Testis (tissue), 5 donors: ENCODE measurements at regions of chr9 and their contacts with region 1.

Region 1: GRCh38 chr9:121686930-121687541 is 35.6 kb downstream of the DAB2IP start:
- DNase-seq: peak; percentile 87
- H3K4me3 ChIP-seq: no peak overlapping the region
- H3K27ac ChIP-seq: no peak overlapping the region
- H3K4me1 ChIP-seq: no peaks in the 10 kb centered on the region
- H3K27me3 ChIP-seq: no peaks in the 10 kb centered on the region
- CTCF ChIP-seq: peak; percentile 53 to 78 (median 71)
- POLR2A ChIP-seq: no peak

Region 2: GRCh38 chr9:121550569-121551512 is 136.2 kb before region 1 on chr9:
- intact Hi-C with region 1: loop called (anchors 10 kb)
- DNase-seq: peak; percentile 90
- H3K4me3 ChIP-seq: peak overlapping the region; percentile 29 to 41
- H3K27ac ChIP-seq: no peak overlapping the region
- H3K4me1 ChIP-seq: peaks cover 3% of the 10 kb centered on the region
- H3K27me3 ChIP-seq: no peaks in the 10 kb centered on the region
- CTCF ChIP-seq: peak; percentile 91 to 95 (median 94)
- POLR2A ChIP-seq: no peak

Region 3: GRCh38 chr9:121992571-121993212 is 305.7 kb after region 1 on chr9:
- intact Hi-C with region 1: loop called (anchors 10 kb)
- DNase-seq: peak; percentile 82
- H3K4me3 ChIP-seq: no peak overlapping the region
- H3K27ac ChIP-seq: no peak overlapping the region
- H3K4me1 ChIP-seq: no peaks in the 10 kb centered on the region
- H3K27me3 ChIP-seq: no peaks in the 10 kb centered on the region
- CTCF ChIP-seq: peak; percentile 84 to 93 (median 91)
- POLR2A ChIP-seq: no peak